ENCODE measurements at regions of chr2 and their contacts with region 1.

Region 1: GRCh38 chr2:191165176-191165643 is 14.4 kb upstream of the STAT4 start:
- DNase-seq: peak; percentile 20
- H3K4me3 ChIP-seq: no peak overlapping the region
- H3K27me3 ChIP-seq: no peaks in the 10 kb centered on the region
- CTCF ChIP-seq: peak; percentile 69

Region 2: DNA sequence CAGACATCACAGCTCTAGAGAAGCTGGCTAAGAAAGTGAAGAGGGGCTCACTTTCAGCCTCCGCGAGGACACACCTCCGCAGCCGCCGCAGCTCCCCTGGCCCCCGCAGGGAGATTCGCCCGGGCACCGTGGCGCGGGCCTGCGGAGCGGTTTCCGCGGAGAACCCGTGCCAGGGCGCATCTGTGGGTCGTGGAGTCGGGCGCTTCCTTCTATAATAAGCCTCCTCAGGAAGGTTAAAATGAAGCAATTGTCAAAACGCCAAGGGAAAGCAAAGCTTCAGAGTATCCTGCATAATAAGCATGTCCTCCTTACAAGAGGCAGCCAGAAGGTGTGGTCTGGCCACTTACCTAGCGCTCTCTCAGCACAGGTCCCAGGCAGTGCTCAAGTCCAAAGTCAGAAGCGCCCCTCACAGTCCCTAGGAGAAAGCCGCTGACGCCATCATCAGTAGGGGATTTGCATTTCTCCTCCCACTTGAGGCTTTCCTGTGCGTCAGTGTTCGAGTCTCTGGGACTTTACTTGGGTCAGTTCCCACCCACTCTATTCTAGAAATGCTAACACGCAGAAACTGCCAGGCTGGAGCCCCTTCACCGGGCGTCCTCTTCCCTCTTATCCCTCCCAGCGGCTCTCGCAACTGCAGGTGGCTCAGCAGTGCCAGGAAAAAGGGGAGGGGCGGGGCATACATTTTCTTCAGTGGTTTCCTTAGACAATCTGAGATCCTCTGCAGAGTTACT is 14.4 kb before region 1 on chr2 and contains the start of gene STAT4:
- CTCF ChIA-PET with region 1: interaction called, 34 read pairs
- POLR2A ChIA-PET with region 1: no interaction called
- DNase-seq: no peak
- H3K4me3 ChIP-seq: peak within 1 kb of the TSS; percentile 31
- H3K27me3 ChIP-seq: no peaks in the 10 kb centered on the region
- CTCF ChIP-seq: no peak
- polyA plus RNA-seq, gene STAT4: 1.3 and 1.5 TPM in 2 replicates

Region 3: GRCh38 chr2:191189112-191189635 is 24.0 kb after region 1 on chr2:
- CTCF ChIA-PET with region 1: no interaction called
- POLR2A ChIA-PET with region 1: no interaction called
- DNase-seq: no peak
- H3K4me3 ChIP-seq: no peak overlapping the region
- H3K27me3 ChIP-seq: no peaks in the 10 kb centered on the region
- CTCF ChIP-seq: no peak

Region 4: DNA sequence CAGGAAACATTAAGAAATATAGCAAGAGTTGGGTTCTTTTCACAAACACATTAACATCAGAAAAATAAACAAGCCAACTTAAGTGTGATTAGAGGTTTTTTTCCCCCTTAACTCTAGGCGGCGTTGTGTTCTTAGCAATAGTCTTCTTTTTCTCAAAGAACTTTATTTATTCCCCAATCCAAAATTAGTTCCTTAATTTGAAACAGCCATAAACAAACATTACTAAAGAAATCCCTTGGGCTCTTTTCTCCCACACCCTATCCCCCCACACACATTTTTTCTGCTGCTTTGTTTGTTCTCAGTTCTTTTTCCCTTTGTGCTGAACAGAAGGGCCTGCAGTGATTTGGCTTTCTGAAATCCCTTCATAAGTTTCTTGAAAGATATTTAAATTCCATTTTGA is 66.8 kb after region 1 on chr2:
- CTCF ChIA-PET with region 1: interaction called, 11 read pairs
- POLR2A ChIA-PET with region 1: no interaction called
- DNase-seq: no peak
- H3K4me3 ChIP-seq: no peak overlapping the region
- H3K27me3 ChIP-seq: no peaks in the 10 kb centered on the region
- CTCF ChIP-seq: peak; percentile 69

Region 5: DNA sequence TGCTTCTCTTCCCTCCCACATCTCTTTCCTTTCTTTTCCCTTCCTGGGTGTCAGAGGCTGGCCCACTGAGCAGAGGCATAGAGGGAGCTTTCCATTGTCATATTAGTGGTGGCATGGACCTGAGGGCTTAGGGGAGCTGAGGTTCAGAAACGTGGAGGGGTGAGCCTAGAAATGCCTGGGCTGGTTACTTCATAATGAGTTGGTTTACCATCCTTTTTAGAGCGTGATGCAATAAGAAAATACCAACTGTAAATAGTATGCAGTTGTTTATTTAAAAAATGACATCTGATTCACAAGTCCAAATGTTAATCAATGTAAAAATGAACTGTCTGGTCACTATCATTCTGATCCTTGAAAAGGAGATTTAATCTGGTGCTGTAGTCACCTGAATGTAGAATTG is 126.3 kb after region 1 on chr2:
- CTCF ChIA-PET with region 1: no interaction called
- POLR2A ChIA-PET with region 1: no interaction called
- DNase-seq: no peak
- H3K4me3 ChIP-seq: no peak overlapping the region
- H3K27me3 ChIP-seq: no peaks in the 10 kb centered on the region
- CTCF ChIP-seq: no peak

Region 6: DNA sequence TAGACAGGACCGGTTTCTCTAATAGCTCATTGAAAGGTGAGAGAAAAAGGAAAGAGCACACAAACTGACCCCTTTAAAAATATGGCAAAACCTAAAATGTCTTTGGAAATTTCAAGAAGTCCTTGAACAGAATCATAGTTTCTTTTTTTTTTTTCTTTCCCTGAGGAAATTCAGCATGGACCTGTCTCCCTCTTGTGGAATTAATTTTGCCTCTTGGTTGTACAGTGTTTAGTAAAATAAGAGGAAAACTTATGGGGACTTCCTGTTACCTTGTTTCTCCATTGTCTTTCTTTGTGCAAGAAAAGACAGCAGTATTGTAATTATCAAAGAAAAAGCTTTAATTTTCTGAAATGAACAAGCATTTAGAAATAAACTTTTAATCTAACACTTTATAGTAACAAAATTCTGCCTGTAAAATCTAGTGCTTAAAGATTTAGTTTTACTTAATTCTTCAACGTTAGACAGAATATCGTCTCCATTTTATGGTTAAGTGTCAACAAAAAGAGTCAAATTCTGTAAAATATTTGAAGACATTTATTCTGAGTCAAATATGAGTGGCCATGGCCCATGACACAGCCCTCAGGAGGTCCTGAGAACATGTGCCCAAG is 336.5 kb after region 1 on chr2:
- CTCF ChIA-PET with region 1: interaction called, 87 read pairs
- POLR2A ChIA-PET with region 1: interaction called, 5 read pairs
- DNase-seq: no peak
- H3K4me3 ChIP-seq: no peak overlapping the region
- H3K27me3 ChIP-seq: no peaks in the 10 kb centered on the region
- CTCF ChIP-seq: peak; percentile 66

Region 7: DNA sequence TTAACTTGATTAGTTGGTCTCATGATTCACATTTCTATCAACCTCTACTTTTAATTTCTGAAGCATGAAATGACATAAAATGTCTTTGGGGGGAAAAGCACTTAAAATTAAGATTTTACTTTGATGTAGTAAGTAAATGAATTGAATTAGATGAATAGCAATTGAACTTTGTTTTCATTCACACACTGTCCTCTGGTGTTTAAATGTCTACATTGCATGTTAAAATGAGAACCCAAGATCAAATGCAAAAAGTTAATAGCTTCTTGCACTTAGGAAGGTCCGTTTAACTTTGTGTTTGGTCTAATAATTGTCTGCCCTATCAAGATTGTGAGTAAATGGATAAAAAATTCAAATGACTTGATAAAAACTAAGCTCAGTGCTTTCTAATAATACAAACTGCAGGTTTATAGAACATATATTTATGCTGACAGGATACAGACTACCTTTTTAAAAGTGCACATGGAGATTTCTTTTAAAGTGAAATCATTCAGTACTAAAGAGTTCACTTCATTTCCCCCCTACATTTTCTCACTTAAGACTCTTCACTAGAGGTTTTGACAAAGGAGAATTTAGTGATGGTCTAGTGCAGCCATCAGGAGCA is 356.5 kb after region 1 on chr2:
- CTCF ChIA-PET with region 1: interaction called, 59 read pairs
- POLR2A ChIA-PET with region 1: no interaction called
- DNase-seq: peak; percentile 16
- H3K4me3 ChIP-seq: no peak overlapping the region
- H3K27me3 ChIP-seq: no peaks in the 10 kb centered on the region
- CTCF ChIP-seq: peak; percentile 72